K562 (cell line): ENCODE measurements at regions of chr1 and their contacts with region 1.

Region 1: DNA sequence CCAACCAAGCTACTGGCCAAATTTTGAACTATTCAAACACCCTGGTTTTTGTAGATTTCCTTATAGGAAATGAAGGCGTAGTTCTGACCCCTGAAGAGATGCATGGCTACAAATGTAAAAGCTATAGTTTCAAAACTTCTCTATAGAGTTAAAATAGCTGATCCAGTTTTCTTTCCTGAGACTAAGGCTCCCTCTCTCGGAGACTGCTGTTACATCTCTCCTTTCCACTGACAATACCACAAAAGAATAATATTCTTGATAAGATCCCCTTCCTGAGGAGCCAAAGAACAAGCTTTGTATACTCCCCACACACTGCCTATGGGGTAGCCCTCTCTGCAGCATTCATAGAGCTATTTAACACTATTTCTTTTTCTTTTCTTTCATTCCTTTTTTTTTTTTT is 6.7 kb upstream of the CFAP126 start:
- DNase-seq: peak in 2 of 4 experiments; percentile 44 to 55
- ATAC-seq: peak; percentile 90
- H3K4me3 ChIP-seq: no peak overlapping the region
- H3K27ac ChIP-seq: no peak overlapping the region
- H3K4me1 ChIP-seq: peaks cover 0 to 7% of the 10 kb centered on the region in 2 experiments; a peak in 2 of 5 replicates
- H3K27me3 ChIP-seq: no peaks in the 10 kb centered on the region
- CTCF ChIP-seq: peak; percentile 47 to 84 (median 52); a peak in 5 of 6 replicates
- EP300 ChIP-seq: no peak
- POLR2A ChIP-seq: no peak
- RAD21 ChIP-seq: peak; percentile 67 to 80

Region 2: GRCh38 chr1:161192476-161193465 is 181.6 kb before region 1 on chr1:
- CTCF ChIA-PET with region 1: interaction called, 3 read pairs
- POLR2A ChIA-PET with region 1: interaction called, 3 read pairs
- in situ Hi-C with region 1: no loop called
- intact Hi-C with region 1: loop called (anchors 2 kb)
- DNase-seq: peak; percentile 79 to 86 (median 80)
- ATAC-seq: peak; percentile 94
- H3K4me3 ChIP-seq: no peak overlapping the region
- H3K27ac ChIP-seq: 0 out of 3 replicates have a peak overlapping the region, but pooled peaks have one; percentile 15
- H3K4me1 ChIP-seq: peaks cover 19 to 33% of the 10 kb centered on the region in 2 experiments
- H3K27me3 ChIP-seq: no peaks in the 10 kb centered on the region
- CTCF ChIP-seq: peak; percentile 93 to 97 (median 95)
- EP300 ChIP-seq: no peak; the same call in 1 of the 2 replicates
- POLR2A ChIP-seq: no peak
- RAD21 ChIP-seq: peak; percentile 76 to 91

Region 3: DNA sequence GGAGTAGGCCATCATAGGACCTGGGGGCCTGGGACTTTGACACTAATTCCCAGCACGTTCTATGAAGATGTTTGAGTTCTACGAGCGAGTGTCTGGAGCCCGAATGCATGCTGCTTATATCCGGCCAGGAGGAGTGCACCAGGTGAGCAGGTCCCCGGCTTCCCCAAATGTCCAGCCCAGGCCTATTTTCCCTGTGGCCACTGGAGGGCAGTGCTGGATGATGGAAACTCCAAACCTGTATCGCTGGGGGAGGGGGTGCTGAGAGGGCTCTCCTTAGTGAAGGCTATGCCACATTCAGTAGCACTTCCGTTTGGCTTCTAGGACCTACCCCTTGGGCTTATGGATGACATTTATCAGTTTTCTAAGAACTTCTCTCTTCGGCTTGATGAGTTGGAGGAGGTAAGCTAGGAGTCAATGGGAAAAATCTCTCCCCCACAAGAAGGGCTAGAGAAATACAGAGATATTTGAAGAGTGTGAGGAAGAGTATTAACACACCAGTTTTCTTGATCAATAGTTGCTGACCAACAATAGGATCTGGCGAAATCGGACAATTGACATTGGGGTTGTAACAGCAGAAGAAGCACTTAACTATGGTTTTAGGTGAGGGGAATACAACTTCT is 164.5 kb before region 1 on chr1:
- CTCF ChIA-PET with region 1: interaction called, 10 read pairs
- POLR2A ChIA-PET with region 1: no interaction called
- in situ Hi-C with region 1: no loop called
- intact Hi-C with region 1: no loop called
- DNase-seq: peak; percentile 86 to 89 (median 86)
- ATAC-seq: peak; percentile 99
- H3K4me3 ChIP-seq: no peak overlapping the region
- H3K27ac ChIP-seq: no peak overlapping the region
- H3K4me1 ChIP-seq: peaks cover 3 to 4% of the 10 kb centered on the region in 2 experiments; a peak in 1 of 5 replicates
- H3K27me3 ChIP-seq: no peaks in the 10 kb centered on the region
- CTCF ChIP-seq: peak; percentile 94 to 97 (median 96)
- EP300 ChIP-seq: no peak
- POLR2A ChIP-seq: no peak
- RAD21 ChIP-seq: peak; percentile 89 to 93

Region 4: DNA sequence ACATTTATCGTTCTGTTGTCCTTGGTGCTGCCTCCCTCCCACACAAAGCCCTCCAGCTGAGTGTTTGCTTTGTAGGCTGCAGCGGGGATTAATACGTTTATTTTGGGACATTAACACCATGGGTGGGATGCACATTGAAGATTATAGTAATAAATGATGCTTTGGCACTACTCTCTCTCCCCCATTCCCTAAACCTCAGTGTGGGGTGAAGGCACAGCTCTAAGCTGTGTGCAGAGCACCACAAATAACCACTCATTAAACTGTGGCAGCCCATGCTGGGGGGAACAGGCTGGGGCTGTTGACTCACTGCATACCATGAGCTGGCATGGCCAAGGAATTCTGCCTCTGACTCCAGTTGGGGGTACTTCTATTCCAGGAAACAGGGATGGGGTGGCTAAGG is 108.2 kb before region 1 on chr1:
- CTCF ChIA-PET with region 1: no interaction called
- POLR2A ChIA-PET with region 1: no interaction called
- in situ Hi-C with region 1: no loop called
- intact Hi-C with region 1: no loop called
- DNase-seq: no peak
- ATAC-seq: no peak
- H3K4me3 ChIP-seq: no peak overlapping the region
- H3K27ac ChIP-seq: no peak overlapping the region
- H3K4me1 ChIP-seq: no peaks in the 10 kb centered on the region; a peak in 1 of 5 replicates
- H3K27me3 ChIP-seq: peaks cover 7 to 30% of the 10 kb centered on the region in 2 experiments; a peak in 4 of 5 replicates
- CTCF ChIP-seq: no peak
- EP300 ChIP-seq: no peak
- POLR2A ChIP-seq: no peak
- RAD21 ChIP-seq: no peak